ENCODE measurements at regions of chr2 and their contacts with region 1.

Region 1: DNA sequence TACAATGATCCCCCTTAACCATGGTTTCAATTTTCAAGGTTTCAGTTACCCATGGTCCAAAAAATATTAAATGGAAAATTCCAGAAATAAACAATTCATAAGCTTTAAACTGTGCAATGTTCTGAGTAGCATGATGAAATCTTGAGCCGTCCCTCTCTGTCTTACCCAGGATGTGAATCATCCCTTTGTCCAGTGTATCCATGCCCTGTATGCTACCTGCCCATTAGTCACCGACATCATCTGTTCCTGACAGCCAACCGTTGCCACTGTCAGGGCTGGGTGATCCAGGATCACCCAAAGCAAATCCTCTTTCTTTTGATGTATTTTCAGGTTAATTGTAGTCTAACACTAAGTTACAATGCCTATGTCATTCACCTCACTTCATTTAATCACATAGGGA is 15.7 kb upstream of the OLA1 start:
- DNase-seq: no peak
- ATAC-seq: no peak
- H3K4me3 Mint-ChIP-seq: no peak overlapping the region
- H3K27ac Mint-ChIP-seq: no peak overlapping the region
- H3K4me1 Mint-ChIP-seq: no peaks in the 10 kb centered on the region
- H3K27me3 Mint-ChIP-seq: peaks cover 25% of the 10 kb centered on the region

Region 2: DNA sequence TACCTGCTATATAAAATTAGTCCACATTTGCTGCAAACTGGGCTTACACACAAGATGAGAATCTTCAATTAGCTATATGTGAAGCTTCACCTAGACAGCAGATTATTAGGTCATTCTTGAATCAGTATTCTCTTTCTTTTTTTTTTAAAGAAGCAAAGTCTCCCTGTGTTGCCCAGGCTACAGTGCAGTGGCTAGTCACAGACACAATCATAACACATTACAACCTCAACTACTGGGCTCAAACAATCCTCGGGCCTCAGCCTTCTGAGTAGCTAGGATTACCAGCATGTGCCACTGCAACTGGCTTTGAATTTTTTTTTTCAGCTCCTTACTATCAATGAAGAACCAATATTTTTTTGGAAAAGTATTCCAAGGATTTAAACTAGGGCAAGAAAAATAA is 46.1 kb before region 1 on chr2:
- CTCF ChIA-PET with region 1: no interaction called
- POLR2A ChIA-PET with region 1: interaction called, 12 read pairs
- intact Hi-C with region 1: no loop called
- DNase-seq: no peak
- ATAC-seq: no peak
- H3K4me3 Mint-ChIP-seq: no peak overlapping the region
- H3K27ac Mint-ChIP-seq: no peak overlapping the region
- H3K4me1 Mint-ChIP-seq: no peaks in the 10 kb centered on the region
- H3K27me3 Mint-ChIP-seq: no peaks in the 10 kb centered on the region